Activated CD4-positive, alpha-beta T cell treated with anti-CD3 and anti-CD28 coated beads for 36 hours (primary cell): ENCODE measurements at regions of chrX and their contacts with region 1.

Region 1: DNA sequence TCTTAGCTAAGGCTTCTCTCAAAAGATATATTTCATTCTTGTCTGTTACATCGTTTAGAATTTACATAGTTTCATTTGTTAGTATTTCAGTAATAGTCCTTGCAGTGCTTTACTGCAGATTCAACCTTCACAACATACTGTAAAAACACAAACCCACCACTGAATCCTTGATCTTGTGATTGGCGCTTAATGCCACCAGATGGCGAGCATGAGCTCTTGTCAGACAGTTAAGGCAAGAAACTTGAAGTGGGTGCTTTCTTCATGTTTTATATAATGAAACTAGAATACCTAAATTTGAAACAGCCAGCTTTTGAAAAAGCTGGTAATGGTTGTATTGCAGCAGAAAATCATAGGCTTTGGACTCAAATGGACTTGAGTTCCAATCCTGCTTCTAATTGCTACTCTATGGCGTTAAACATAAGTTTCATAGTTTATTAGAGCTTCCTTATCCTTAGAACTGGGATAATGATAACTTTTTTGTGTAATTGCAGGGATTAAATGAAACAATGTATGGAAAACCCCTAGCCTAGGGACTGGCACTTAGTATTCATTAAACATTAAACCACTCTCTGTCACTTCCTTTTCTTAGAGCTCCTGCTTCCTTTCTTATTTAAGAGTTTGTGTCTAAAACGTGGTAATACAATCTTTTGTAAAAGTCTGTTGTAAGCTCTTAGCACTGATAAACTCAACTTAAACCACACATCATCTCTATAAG is 95.1 kb downstream of the USP9X start:
- DNase-seq: peak; percentile 63
- ATAC-seq: peak; percentile 88
- H3K4me3 Mint-ChIP-seq: no peak overlapping the region
- H3K27ac Mint-ChIP-seq: peak overlapping the region; percentile 85
- H3K4me1 Mint-ChIP-seq: peaks cover 34% of the 10 kb centered on the region
- H3K27me3 Mint-ChIP-seq: no peaks in the 10 kb centered on the region

Region 2: GRCh38 chrX:41164449-41164848 is 15.9 kb before region 1 on chrX:
- CTCF ChIA-PET with region 1: interaction called, 25 read pairs
- POLR2A ChIA-PET with region 1: no interaction called
- intact Hi-C with region 1: no loop called
- DNase-seq: no peak
- ATAC-seq: no peak
- H3K4me3 Mint-ChIP-seq: no peak overlapping the region
- H3K27ac Mint-ChIP-seq: no peak overlapping the region
- H3K4me1 Mint-ChIP-seq: peaks cover 6% of the 10 kb centered on the region
- H3K27me3 Mint-ChIP-seq: no peaks in the 10 kb centered on the region

Region 3: DNA sequence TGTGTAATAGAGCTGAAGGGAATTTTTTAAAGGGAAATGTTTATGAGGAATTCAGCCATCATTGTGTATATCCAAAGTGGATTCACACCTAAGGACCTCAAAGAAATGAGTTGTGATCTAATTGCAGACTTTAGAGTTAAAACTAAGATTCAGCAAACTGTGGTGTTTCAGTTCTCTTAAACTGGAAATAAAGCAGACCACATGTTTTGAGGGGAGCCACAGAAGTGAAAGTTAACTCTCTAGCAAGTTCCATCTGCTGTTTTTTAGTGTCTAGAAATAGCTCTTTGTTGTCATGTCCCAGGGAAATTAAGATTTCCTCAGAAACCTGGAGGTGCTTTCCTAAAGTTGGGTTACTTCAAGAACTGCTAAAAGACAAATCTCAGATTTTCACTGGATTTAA is 56.3 kb after region 1 on chrX:
- CTCF ChIA-PET with region 1: interaction called, 9 read pairs
- POLR2A ChIA-PET with region 1: no interaction called
- intact Hi-C with region 1: loop called in 1 of 2 experiments (anchors 10 kb)
- DNase-seq: no peak
- ATAC-seq: peak; percentile 47
- H3K4me3 Mint-ChIP-seq: no peak overlapping the region
- H3K27ac Mint-ChIP-seq: no peak overlapping the region
- H3K4me1 Mint-ChIP-seq: peaks cover 5% of the 10 kb centered on the region
- H3K27me3 Mint-ChIP-seq: no peaks in the 10 kb centered on the region

Region 4: DNA sequence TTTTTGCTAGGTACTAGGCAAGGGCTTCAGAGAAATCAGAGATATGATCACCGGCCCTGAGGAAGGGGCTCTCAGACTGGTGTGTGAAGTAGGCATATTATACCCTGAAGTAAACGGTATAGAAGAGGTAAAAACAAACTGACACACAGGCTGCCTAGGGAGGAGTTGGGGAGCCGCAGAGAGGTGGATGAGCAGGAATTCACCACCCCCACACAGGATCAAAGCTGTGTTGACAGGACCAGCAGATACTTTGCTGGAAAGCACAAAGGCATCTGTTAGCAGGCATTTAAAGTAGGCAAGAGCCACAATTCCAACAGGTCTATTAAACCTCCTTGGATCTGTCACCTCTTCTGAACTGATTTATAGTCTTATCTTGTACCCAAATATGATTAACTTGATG is 436.6 kb after region 1 on chrX:
- CTCF ChIA-PET with region 1: no interaction called
- POLR2A ChIA-PET with region 1: no interaction called
- intact Hi-C with region 1: no loop called
- DNase-seq: no peak
- ATAC-seq: no peak
- H3K4me3 Mint-ChIP-seq: no peak overlapping the region
- H3K27ac Mint-ChIP-seq: no peak overlapping the region
- H3K4me1 Mint-ChIP-seq: no peaks in the 10 kb centered on the region
- H3K27me3 Mint-ChIP-seq: no peaks in the 10 kb centered on the region